ENCODE measurements at regions of chr9 and their contacts with region 1.

Region 1: DNA sequence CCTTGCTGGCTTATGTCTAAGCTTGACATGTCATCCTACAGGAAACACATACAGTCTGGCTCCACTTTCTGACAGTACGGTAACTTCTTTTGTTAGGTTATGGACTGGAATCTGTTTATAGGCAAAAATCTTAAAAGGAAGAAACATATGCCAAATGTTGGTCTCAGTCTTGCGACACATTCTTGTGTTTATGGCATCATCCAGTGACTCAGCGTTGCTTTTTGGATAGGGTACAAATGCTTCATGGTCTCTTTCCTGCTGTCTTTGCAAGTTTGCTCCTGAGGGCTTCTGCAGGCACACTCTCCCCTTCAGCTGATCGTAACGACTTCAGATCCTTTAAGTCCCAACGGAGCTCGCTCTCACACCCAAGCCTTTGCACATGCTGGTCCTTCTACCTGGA is 23.5 kb upstream of the TNFSF8 start:
- DNase-seq: no peak
- H3K4me3 Mint-ChIP-seq: no peak overlapping the region
- H3K27ac Mint-ChIP-seq: peak overlapping the region; percentile 35
- H3K4me1 Mint-ChIP-seq: peaks cover 53% of the 10 kb centered on the region
- H3K27me3 Mint-ChIP-seq: no peaks in the 10 kb centered on the region

Region 2: GRCh38 chr9:114681594-114682332 is 272.2 kb before region 1 on chr9 and contains the start of gene TEX48:
- intact Hi-C with region 1: loop called (anchors 1 kb)
- DNase-seq: peak; percentile 76
- H3K4me3 Mint-ChIP-seq: peak within 1 kb of the TSS; percentile 49
- H3K27ac Mint-ChIP-seq: peak within 1 kb of the TSS; percentile 97
- H3K4me1 Mint-ChIP-seq: peaks cover 81% of the 10 kb centered on the region
- H3K27me3 Mint-ChIP-seq: no peaks in the 10 kb centered on the region
- total RNA-seq, gene TEX48: 1.0 and 1.2 TPM in 2 replicates

Region 3: GRCh38 chr9:114718801-114719221 is 235.1 kb before region 1 on chr9:
- intact Hi-C with region 1: loop called (anchors 1 kb)
- DNase-seq: peak; percentile 94
- H3K4me3 Mint-ChIP-seq: peak overlapping the region; percentile 28
- H3K27ac Mint-ChIP-seq: peak overlapping the region; percentile 98
- H3K4me1 Mint-ChIP-seq: peaks cover 82% of the 10 kb centered on the region
- H3K27me3 Mint-ChIP-seq: peaks cover 2% of the 10 kb centered on the region

Region 4: DNA sequence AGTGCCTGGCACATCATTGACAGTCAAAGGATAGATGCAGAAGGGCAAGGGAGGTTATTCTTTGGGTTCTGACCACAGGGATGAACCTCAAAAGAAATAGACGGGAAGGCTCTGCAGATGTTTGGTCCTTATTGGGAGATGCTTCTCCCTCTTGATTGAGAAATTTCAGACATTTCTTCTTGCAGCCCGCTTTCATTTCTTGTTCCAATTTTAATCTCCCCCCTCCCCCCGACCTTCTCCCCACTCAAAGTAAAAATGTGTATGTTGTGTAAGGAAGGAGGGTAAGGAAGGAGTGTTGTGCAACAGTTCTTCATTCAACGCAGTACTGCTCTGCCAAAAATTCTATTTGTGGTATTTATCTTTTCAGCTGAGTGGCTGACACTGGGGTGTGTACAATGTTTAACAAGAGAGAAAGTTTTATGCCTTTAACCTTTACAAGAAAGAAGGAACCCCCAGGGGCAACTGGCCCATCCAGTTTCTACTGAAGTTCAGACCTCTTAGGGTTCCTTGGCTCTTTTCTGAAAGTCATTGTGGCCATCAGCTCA is 101.8 kb before region 1 on chr9:
- intact Hi-C with region 1: no loop called
- DNase-seq: no peak
- H3K4me3 Mint-ChIP-seq: no peak overlapping the region
- H3K27ac Mint-ChIP-seq: no peak overlapping the region
- H3K4me1 Mint-ChIP-seq: peaks cover 17% of the 10 kb centered on the region
- H3K27me3 Mint-ChIP-seq: peaks cover 3% of the 10 kb centered on the region

Region 5: DNA sequence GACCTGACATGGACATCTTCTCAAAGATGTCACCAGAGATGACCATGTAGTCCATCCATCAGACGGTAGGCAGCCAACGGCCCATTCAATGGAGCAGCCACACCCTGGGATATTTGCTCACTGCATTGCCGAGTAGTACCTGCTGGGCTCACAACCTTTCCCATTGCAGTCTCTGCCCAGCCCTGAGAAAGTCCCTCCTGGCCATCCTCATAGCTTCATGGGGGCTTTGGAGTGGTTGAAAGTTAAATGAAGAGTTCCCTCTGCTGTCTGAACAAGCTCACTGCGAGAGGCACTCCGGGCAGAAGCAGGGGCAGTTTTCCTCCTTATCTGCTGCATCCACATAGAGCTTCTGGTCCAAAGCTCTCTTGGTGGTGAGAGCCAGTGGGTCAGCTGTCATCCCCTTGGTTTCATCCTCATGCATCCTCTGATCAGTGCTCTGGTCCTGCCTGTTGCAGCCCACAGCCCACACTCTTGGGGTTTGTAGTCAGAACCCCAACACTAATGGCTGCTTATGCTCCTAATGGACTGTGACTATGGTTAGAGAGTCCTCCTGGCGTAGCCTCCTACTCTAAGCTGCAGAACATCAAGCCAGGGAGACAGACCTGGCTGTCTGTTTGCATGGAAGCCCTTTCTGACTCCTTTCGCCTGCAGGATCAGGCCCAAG is 46.9 kb before region 1 on chr9:
- intact Hi-C with region 1: loop called (anchors 1 kb)
- DNase-seq: no peak
- H3K4me3 Mint-ChIP-seq: peak overlapping the region; percentile 67
- H3K27ac Mint-ChIP-seq: peak overlapping the region; percentile 97
- H3K4me1 Mint-ChIP-seq: peaks cover 55% of the 10 kb centered on the region
- H3K27me3 Mint-ChIP-seq: no peaks in the 10 kb centered on the region

Region 6: DNA sequence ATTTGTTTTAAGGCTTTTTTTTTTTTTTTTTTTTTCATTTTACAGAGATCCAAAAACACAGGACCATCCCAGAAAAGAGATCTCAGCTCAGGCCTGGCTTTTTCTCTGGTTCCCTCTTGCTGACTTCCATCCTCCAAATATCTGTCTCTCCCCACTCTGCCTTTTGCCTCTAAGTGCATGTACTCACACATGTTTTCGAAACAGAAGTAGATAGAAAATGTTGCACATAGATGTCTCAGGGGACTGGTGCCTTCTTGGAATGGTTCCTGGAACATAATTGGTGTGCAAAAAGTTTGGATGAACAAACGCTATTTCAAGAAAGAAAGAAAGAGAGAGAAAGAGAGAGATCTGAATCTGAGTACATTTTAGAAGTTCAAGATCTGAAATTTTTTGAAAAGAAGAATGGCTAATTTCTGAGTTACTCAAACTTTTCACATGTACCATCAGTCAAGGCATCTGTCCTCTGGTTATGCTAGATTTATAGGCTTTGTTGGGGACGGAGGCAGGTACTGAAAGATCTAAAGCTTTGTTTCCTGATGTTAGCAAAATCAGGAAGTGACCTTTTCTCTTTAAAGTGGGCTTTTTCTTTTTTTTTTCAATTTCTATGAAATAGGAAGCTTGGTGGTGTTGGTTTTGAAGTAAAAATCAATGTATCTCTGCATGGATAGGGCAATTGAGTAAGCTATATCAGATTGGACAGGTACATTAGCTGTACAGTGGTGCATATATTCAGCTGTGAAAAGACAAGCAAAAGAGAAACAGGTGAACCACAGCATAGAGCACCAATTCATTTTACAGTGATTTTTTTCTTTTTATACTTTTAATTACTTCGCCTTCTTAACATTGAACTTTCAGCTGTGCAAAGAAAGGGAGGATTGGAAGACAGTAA is 15.0 kb before region 1 on chr9:
- intact Hi-C with region 1: no loop called
- DNase-seq: no peak
- H3K4me3 Mint-ChIP-seq: no peak overlapping the region
- H3K27ac Mint-ChIP-seq: peak overlapping the region; percentile 35
- H3K4me1 Mint-ChIP-seq: peaks cover 26% of the 10 kb centered on the region
- H3K27me3 Mint-ChIP-seq: no peaks in the 10 kb centered on the region

Region 7: GRCh38 chr9:114968671-114969070 is 14.8 kb after region 1 on chr9:
- intact Hi-C with region 1: loop called (anchors 1 kb)
- DNase-seq: no peak
- H3K4me3 Mint-ChIP-seq: no peak overlapping the region
- H3K27ac Mint-ChIP-seq: peak overlapping the region; percentile 53
- H3K4me1 Mint-ChIP-seq: peaks cover 24% of the 10 kb centered on the region
- H3K27me3 Mint-ChIP-seq: peaks cover 2% of the 10 kb centered on the region

Region 8: GRCh38 chr9:115013998-115014397 is 60.1 kb after region 1 on chr9:
- intact Hi-C with region 1: loop called (anchors 1 kb)
- DNase-seq: peak; percentile 73
- H3K4me3 Mint-ChIP-seq: no peak overlapping the region
- H3K27ac Mint-ChIP-seq: peak overlapping the region; percentile 52
- H3K4me1 Mint-ChIP-seq: peaks cover 72% of the 10 kb centered on the region
- H3K27me3 Mint-ChIP-seq: peaks cover 3% of the 10 kb centered on the region

Region 9: GRCh38 chr9:115042781-115043509 is 89.0 kb after region 1 on chr9:
- intact Hi-C with region 1: no loop called
- DNase-seq: peak; percentile 7
- H3K4me3 Mint-ChIP-seq: peak overlapping the region; percentile 1
- H3K27ac Mint-ChIP-seq: peak overlapping the region; percentile 78
- H3K4me1 Mint-ChIP-seq: peaks cover 47% of the 10 kb centered on the region
- H3K27me3 Mint-ChIP-seq: peaks cover 17% of the 10 kb centered on the region

Measured in activated T-helper 1 cell treated with anti-CD3 and anti-CD28 coated beads, Interleukin-12 subunit alpha, Interleukin-12 subunit beta, Interleukin-2, Interleukin-4 antibody, amounts not matched to agents 30 ng/mL and 10 ng/mL and 1 ng/mL, durations not matched to agents 14 hours and 24 hours and 36 hours (primary cell).